ENCODE measurements at regions of chr4 and their contacts with region 1.

Region 1: DNA sequence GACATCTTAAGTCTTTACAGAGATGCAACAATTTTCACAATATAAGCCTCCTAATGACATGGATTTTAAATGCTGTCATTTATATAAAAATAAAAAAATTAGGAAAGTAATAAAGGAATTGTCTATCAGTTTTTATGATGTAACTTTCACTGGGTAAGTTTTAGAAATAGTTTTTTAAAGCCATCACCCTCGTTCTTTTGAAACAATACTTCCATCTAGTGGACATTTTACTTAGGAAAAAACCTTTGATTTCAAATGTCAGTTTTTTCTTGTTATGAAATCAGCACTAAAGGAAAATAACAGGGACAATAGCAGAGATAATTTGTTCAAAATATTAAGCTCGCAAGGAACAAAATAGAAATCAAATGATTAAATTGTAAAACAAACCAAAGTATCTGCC is 24.3 kb upstream of the NDNF start:
- DNase-seq: no peak
- H3K4me3 ChIP-seq: no peak overlapping the region
- H3K27ac ChIP-seq: no peak overlapping the region
- H3K4me1 ChIP-seq: no peaks in the 10 kb centered on the region
- H3K27me3 ChIP-seq: no peaks in the 10 kb centered on the region
- CTCF ChIP-seq: peak; percentile 55 to 62

Region 2: GRCh38 chr4:120071192-120071795 is 1025.3 kb before region 1 on chr4:
- intact Hi-C with region 1: loop called (anchors 10 kb)
- DNase-seq: no peak
- H3K4me3 ChIP-seq: no peak overlapping the region
- H3K27ac ChIP-seq: no peak overlapping the region
- H3K4me1 ChIP-seq: peaks cover 0 to 15% (median 9%) of the 10 kb centered on the region in 4 donors
- H3K27me3 ChIP-seq: no peaks in the 10 kb centered on the region
- CTCF ChIP-seq: peak; percentile 43 to 56

Region 3: GRCh38 chr4:120156120-120156718 is 940.4 kb before region 1 on chr4:
- intact Hi-C with region 1: loop called (anchors 5 kb)
- DNase-seq: no peak
- H3K4me3 ChIP-seq: no peak overlapping the region
- H3K27ac ChIP-seq: no peak overlapping the region
- H3K4me1 ChIP-seq: no peaks in the 10 kb centered on the region
- H3K27me3 ChIP-seq: no peaks in the 10 kb centered on the region
- CTCF ChIP-seq: peak; percentile 72 to 76

Region 4: DNA sequence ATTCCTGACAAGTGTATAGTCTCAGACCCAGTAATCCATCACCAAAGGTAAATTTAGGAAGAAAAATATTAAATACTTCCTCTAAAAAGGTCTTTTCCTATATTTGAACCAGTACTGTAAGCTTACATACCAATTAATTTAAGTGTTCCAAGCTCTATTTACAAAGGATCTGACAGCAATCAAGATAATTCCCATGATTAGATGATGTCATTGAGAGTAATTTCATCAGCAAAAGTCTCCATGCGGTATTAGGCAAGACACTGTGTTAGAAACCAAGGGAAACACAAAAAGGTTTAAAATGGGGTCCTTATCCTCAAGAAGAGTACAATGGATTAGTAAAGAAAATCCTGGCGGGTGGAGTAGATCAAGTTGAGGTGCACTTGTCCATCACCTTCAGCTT is 372.6 kb before region 1 on chr4:
- intact Hi-C with region 1: loop called (anchors 10 kb)
- DNase-seq: no peak
- H3K4me3 ChIP-seq: no peak overlapping the region
- H3K27ac ChIP-seq: no peak overlapping the region
- H3K4me1 ChIP-seq: no peaks in the 10 kb centered on the region
- H3K27me3 ChIP-seq: no peaks in the 10 kb centered on the region
- CTCF ChIP-seq: no peak